K562 (cell line): ENCODE measurements at regions of chr17 and their contacts with region 1.

Region 1: DNA sequence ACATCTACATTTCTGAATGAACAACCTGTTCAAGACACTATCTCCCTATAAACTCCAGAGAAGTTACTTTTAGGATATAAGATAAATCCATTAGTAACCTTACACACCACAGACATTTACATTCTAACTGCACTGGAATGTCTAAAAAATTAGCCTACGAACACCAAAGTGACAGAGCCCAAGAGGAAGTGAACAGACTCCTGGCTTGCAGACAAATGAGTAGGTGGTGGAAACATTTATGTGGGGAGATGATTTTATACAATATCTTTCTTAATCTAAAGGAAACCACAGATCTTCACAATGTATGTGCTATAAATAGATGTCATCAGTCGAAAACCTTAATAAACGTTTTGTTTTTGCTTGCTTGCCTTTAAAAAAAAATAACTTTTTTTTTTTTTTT is 18.8 kb downstream of the ZNF652 start:
- DNase-seq: no peak
- ATAC-seq: no peak
- H3K4me3 ChIP-seq: no peak overlapping the region
- H3K27ac ChIP-seq: no peak overlapping the region; the same call in 2 of the 3 replicates
- H3K4me1 ChIP-seq: peaks cover 7 to 22% of the 10 kb centered on the region in 2 experiments; a peak in 4 of 5 replicates
- H3K27me3 ChIP-seq: no peaks in the 10 kb centered on the region
- CTCF ChIP-seq: no peak
- EP300 ChIP-seq: no peak
- POLR2A ChIP-seq: no peak
- RAD21 ChIP-seq: no peak

Region 2: GRCh38 chr17:49361902-49362722 is 18.8 kb after region 1 on chr17 and contains the start of gene ZNF652:
- CTCF ChIA-PET with region 1: no interaction called
- POLR2A ChIA-PET with region 1: interaction called, 12 read pairs
- in situ Hi-C with region 1: no loop called
- intact Hi-C with region 1: no loop called
- DNase-seq: peak; percentile 97 to 99 (median 98)
- ATAC-seq: peak; percentile 83
- H3K4me3 ChIP-seq: peak within 1 kb of the TSS; percentile 86
- H3K27ac ChIP-seq: peak within 1 kb of the TSS; percentile 89
- H3K4me1 ChIP-seq: peaks cover 15 to 40% of the 10 kb centered on the region in 2 experiments; a peak in 4 of 5 replicates
- H3K27me3 ChIP-seq: no peaks in the 10 kb centered on the region
- CTCF ChIP-seq: no peak
- EP300 ChIP-seq: no peak; the same call in 1 of the 2 replicates
- POLR2A ChIP-seq: peak; percentile 72
- RAD21 ChIP-seq: no peak
- polyA plus RNA-seq, gene ZNF652: 6.1 to 7.8 TPM

Region 3: DNA sequence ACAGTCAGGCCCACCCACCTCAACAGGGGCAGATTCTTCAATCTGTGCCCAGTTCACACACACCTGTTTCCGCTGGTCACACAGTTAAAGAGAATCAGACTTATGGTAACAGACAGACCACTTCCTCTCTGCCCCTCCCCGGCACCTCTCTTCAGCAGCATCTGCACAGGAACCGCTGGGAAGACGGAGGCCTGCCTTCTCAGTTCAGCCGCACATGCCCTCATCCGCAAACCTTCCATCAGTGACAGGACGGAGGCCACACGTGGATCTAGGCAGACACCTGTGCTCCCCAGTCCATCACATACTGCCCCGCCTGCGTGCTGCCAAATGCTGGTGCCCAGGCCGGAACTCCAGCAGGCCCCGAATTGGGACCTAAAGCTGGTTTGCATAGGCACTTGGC is 61.1 kb after region 1 on chr17:
- CTCF ChIA-PET with region 1: no interaction called
- POLR2A ChIA-PET with region 1: no interaction called
- in situ Hi-C with region 1: no loop called
- intact Hi-C with region 1: no loop called
- DNase-seq: no peak
- ATAC-seq: no peak
- H3K4me3 ChIP-seq: no peak overlapping the region
- H3K27ac ChIP-seq: no peak overlapping the region
- H3K4me1 ChIP-seq: no peaks in the 10 kb centered on the region; a peak in 1 of 5 replicates
- H3K27me3 ChIP-seq: no peaks in the 10 kb centered on the region
- CTCF ChIP-seq: no peak
- EP300 ChIP-seq: no peak
- POLR2A ChIP-seq: no peak
- RAD21 ChIP-seq: no peak

Region 4: GRCh38 chr17:49585422-49586027 is 242.3 kb after region 1 on chr17:
- CTCF ChIA-PET with region 1: no interaction called
- POLR2A ChIA-PET with region 1: no interaction called
- in situ Hi-C with region 1: no loop called
- intact Hi-C with region 1: no loop called
- DNase-seq: peak; percentile 41 to 49 (median 46)
- ATAC-seq: peak; percentile 93
- H3K4me3 ChIP-seq: no peak overlapping the region
- H3K27ac ChIP-seq: no peak overlapping the region
- H3K4me1 ChIP-seq: peaks cover 0 to 4% of the 10 kb centered on the region in 2 experiments; a peak in 2 of 5 replicates
- H3K27me3 ChIP-seq: no peaks in the 10 kb centered on the region
- CTCF ChIP-seq: peak; percentile 34 to 52 (median 47)
- EP300 ChIP-seq: no peak
- POLR2A ChIP-seq: no peak
- RAD21 ChIP-seq: no peak